ENCODE measurements at regions of chr1 and their contacts with region 1.

Region 1: GRCh38 chr1:26321315-26322041 is 3.7 kb downstream of the CD52 start:
- DNase-seq: peak; percentile 90
- CTCF ChIP-seq: peak; percentile 95

Region 2: GRCh38 chr1:26279456-26280332 is 41.8 kb before region 1 on chr1 and contains the start of gene SH3BGRL3:
- in situ Hi-C with region 1: loop called (anchors 5 kb)
- DNase-seq: peak; percentile 97
- CTCF ChIP-seq: peak; percentile 45